GM10248 (cell line): ENCODE measurements at regions of chr13 and their contacts with region 1.

Region 1: GRCh38 chr13:36275190-36276002 is 22.2 kb downstream of the CCDC169 start:
- DNase-seq: no peak
- CTCF ChIP-seq: no peak

Region 2: DNA sequence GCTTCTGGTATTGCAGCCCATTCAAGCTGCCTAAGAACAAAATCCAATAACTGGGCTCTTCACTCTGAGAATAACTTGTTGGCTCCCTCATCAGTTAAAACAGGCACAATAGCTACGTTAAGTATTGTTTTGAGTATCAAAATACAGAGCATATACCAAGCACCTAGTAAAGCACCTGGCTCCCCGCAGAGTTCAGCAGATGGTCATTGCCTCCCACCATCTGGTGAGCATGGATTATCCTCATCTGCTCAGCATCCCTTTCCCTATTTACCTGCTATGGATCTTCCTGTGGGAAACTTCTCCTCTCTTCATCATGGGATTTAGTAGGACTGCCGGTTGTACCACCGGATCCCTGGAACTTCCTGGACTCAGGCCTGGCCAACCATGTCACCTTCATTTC is 599.7 kb before region 1 on chr13:
- CTCF ChIA-PET with region 1: no interaction called
- POLR2A ChIA-PET with region 1: no interaction called
- DNase-seq: no peak
- CTCF ChIP-seq: no peak

Region 3: GRCh38 chr13:35917252-35917941 is 358.0 kb before region 1 on chr13:
- CTCF ChIA-PET with region 1: no interaction called
- POLR2A ChIA-PET with region 1: no interaction called
- DNase-seq: no peak
- CTCF ChIP-seq: no peak

Region 4: GRCh38 chr13:35978603-35979316 is 296.6 kb before region 1 on chr13:
- CTCF ChIA-PET with region 1: interaction called, 18 read pairs
- POLR2A ChIA-PET with region 1: no interaction called
- DNase-seq: peak; percentile 54
- CTCF ChIP-seq: peak; percentile 57

Region 5: GRCh38 chr13:36261976-36262375 is 13.4 kb before region 1 on chr13:
- CTCF ChIA-PET with region 1: interaction called, 17 read pairs
- POLR2A ChIA-PET with region 1: no interaction called
- DNase-seq: no peak
- CTCF ChIP-seq: no peak

Region 6: DNA sequence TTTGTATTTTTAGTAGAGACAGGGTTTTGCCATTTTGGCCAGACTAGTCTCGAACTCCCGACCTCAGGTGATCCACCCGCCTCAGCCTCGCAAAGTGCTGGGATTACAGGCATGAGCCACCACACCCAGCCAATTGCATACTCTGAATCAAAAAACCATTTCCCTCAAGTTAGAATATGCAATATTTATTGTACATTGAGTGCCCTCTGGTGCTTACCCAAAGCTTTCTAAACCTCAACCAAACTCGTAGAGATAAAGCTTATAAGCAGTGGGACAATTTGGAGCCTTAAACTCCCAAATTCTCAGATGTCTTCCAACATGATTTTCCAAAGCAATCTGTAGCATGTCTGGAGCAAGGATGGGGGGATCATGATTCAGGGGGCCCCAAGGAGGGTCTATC is 566.0 kb after region 1 on chr13:
- CTCF ChIA-PET with region 1: no interaction called
- POLR2A ChIA-PET with region 1: no interaction called
- DNase-seq: no peak
- CTCF ChIP-seq: no peak

Region 7: GRCh38 chr13:37403776-37404528 is 1128.6 kb after region 1 on chr13:
- CTCF ChIA-PET with region 1: no interaction called
- POLR2A ChIA-PET with region 1: no interaction called
- DNase-seq: no peak
- CTCF ChIP-seq: no peak